Activated naive CD4-positive, alpha-beta T cell treated with anti-CD3 and anti-CD28 coated beads for 36 hours (primary cell): ENCODE measurements at regions of chr10 and their contacts with region 1.

Region 1: GRCh38 chr10:80662577-80663261 is 125.0 kb downstream of the SH2D4B start:
- DNase-seq: peak; percentile 83
- H3K4me3 Mint-ChIP-seq: peak overlapping the region; percentile 52
- H3K27ac Mint-ChIP-seq: no peak overlapping the region
- H3K4me1 Mint-ChIP-seq: peaks cover 4% of the 10 kb centered on the region
- H3K27me3 Mint-ChIP-seq: peaks cover 9% of the 10 kb centered on the region

Region 2: GRCh38 chr10:80459047-80459931 is 203.4 kb before region 1 on chr10:
- CTCF ChIA-PET with region 1: no interaction called
- intact Hi-C with region 1: no loop called
- DNase-seq: peak; percentile 83
- H3K4me3 Mint-ChIP-seq: peak overlapping the region; percentile 76
- H3K27ac Mint-ChIP-seq: peak overlapping the region; percentile 93
- H3K4me1 Mint-ChIP-seq: peaks cover 82% of the 10 kb centered on the region
- H3K27me3 Mint-ChIP-seq: no peaks in the 10 kb centered on the region

Region 3: GRCh38 chr10:80599424-80599847 is 63.3 kb before region 1 on chr10:
- CTCF ChIA-PET with region 1: interaction called, 23 read pairs
- intact Hi-C with region 1: loop called (anchors 2 kb)
- DNase-seq: peak; percentile 58
- H3K4me3 Mint-ChIP-seq: no peak overlapping the region
- H3K27ac Mint-ChIP-seq: no peak overlapping the region
- H3K4me1 Mint-ChIP-seq: no peaks in the 10 kb centered on the region
- H3K27me3 Mint-ChIP-seq: no peaks in the 10 kb centered on the region

Region 4: GRCh38 chr10:80681142-80681541 is 18.4 kb after region 1 on chr10:
- CTCF ChIA-PET with region 1: interaction called, 19 read pairs
- intact Hi-C with region 1: no loop called
- DNase-seq: no peak
- H3K4me3 Mint-ChIP-seq: no peak overlapping the region
- H3K27ac Mint-ChIP-seq: no peak overlapping the region
- H3K4me1 Mint-ChIP-seq: no peaks in the 10 kb centered on the region
- H3K27me3 Mint-ChIP-seq: peaks cover 3% of the 10 kb centered on the region

Region 5: DNA sequence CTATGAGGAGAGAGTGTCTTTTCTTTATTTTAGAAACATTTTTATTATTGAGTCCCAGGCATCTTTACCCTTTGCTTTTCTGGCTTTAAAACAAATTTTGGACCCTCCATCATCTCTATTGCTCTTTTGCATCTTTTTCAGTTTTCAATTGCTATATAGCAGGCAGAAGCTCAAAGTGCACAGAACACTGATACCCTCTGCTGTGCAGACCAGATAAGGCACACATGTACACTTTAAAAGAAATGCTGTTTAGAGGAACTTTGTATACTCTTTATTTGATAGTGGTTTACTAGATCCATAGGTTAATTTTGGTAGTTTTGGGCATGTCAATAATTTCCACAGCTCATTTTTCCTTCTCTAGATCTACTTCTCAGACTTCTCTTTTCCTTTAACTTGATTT is 199.2 kb after region 1 on chr10:
- CTCF ChIA-PET with region 1: interaction called, 5 read pairs
- intact Hi-C with region 1: loop called (anchors 1 kb)
- DNase-seq: no peak
- H3K4me3 Mint-ChIP-seq: no peak overlapping the region
- H3K27ac Mint-ChIP-seq: no peak overlapping the region
- H3K4me1 Mint-ChIP-seq: no peaks in the 10 kb centered on the region
- H3K27me3 Mint-ChIP-seq: peaks cover 6% of the 10 kb centered on the region

Region 6: DNA sequence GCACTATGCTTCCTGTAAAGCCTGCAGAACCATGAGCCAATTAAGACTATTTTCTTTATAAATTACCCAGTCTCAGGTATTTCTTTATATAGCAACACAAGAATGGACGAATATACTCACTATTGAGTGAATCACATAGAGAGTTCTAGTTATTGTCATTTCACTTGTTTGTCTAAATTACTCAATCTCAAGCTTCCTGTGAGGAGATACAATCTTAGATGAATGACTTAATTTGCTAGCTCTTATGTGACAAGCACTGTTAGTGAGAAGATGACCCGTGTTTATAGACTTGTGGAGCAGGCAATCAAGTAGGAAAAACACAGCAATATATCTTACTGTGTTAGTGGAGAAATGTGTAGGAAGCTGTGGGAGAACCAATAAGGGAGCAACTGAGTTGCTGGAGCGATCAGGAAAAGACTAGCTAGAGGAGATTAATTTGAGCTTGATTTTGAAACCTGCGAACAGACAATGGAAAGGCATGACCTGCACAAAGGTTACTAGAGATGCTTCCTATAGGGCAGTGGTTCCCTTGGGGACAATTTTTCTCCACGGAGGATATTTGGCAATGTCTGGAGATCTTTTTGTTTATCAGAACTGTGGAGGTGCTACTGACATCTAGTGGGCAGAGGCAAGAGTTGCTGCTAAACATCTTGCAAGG is 356.1 kb after region 1 on chr10:
- CTCF ChIA-PET with region 1: interaction called, 26 read pairs
- intact Hi-C with region 1: loop called (anchors 1 kb)
- DNase-seq: peak; percentile 45
- H3K4me3 Mint-ChIP-seq: no peak overlapping the region
- H3K27ac Mint-ChIP-seq: no peak overlapping the region
- H3K4me1 Mint-ChIP-seq: no peaks in the 10 kb centered on the region
- H3K27me3 Mint-ChIP-seq: peaks cover 2% of the 10 kb centered on the region